ENCODE measurements at regions of chr4 and their contacts with region 1.

Region 1: GRCh38 chr4:166165829-166166420 is 292.9 kb downstream of the TLL1 start:
- DNase-seq: no peak
- H3K4me3 Mint-ChIP-seq: no peak overlapping the region
- H3K27ac Mint-ChIP-seq: no peak overlapping the region
- H3K4me1 Mint-ChIP-seq: no peaks in the 10 kb centered on the region
- H3K27me3 Mint-ChIP-seq: no peaks in the 10 kb centered on the region

Region 2: GRCh38 chr4:166252487-166253402 is 86.8 kb after region 1 on chr4:
- CTCF ChIA-PET with region 1: no interaction called
- POLR2A ChIA-PET with region 1: no interaction called
- intact Hi-C with region 1: loop called (anchors 1 kb)
- DNase-seq: no peak
- H3K4me3 Mint-ChIP-seq: no peak overlapping the region
- H3K27ac Mint-ChIP-seq: no peak overlapping the region
- H3K4me1 Mint-ChIP-seq: no peaks in the 10 kb centered on the region
- H3K27me3 Mint-ChIP-seq: no peaks in the 10 kb centered on the region

Region 3: GRCh38 chr4:166594326-166594946 is 428.5 kb after region 1 on chr4:
- CTCF ChIA-PET with region 1: no interaction called
- POLR2A ChIA-PET with region 1: no interaction called
- intact Hi-C with region 1: loop called (anchors 10 kb)
- DNase-seq: no peak
- H3K4me3 Mint-ChIP-seq: no peak overlapping the region
- H3K27ac Mint-ChIP-seq: no peak overlapping the region
- H3K4me1 Mint-ChIP-seq: no peaks in the 10 kb centered on the region
- H3K27me3 Mint-ChIP-seq: no peaks in the 10 kb centered on the region

Region 4: DNA sequence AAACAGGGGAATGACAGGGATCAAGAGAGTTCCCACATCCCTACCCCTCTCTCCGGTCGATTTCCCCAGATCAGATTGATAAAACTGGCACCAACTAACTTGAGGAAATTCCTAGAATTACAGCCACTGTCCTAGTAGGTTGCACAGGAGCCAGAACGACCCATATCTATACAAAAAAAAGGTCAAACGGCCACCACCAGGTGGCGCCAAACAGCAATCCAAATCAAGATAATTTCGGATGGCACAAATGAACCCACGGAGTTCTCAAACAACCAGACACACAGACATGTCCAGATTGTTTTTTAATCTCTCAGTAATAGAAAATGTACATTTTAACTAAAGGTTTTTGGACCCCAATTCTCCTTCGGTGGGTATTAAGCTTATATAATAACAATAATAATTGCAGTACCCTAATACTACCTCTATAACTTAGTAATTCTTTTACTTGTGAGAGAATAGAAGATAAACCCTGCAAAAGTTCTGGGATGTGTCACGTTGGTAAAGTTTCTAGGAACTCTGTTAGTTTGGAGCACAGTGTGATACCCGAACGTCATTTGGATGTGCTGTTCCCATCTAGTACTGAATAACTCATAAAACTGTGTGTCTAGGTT is 855.7 kb after region 1 on chr4:
- CTCF ChIA-PET with region 1: no interaction called
- POLR2A ChIA-PET with region 1: no interaction called
- intact Hi-C with region 1: loop called (anchors 5 kb)
- DNase-seq: peak; percentile 67
- H3K4me3 Mint-ChIP-seq: no peak overlapping the region
- H3K27ac Mint-ChIP-seq: no peak overlapping the region
- H3K4me1 Mint-ChIP-seq: no peaks in the 10 kb centered on the region
- H3K27me3 Mint-ChIP-seq: no peaks in the 10 kb centered on the region

Region 5: GRCh38 chr4:168076989-168077725 is 1911.2 kb after region 1 on chr4:
- CTCF ChIA-PET with region 1: no interaction called
- POLR2A ChIA-PET with region 1: no interaction called
- intact Hi-C with region 1: loop called (anchors 2 kb)
- DNase-seq: peak; percentile 53
- H3K4me3 Mint-ChIP-seq: no peak overlapping the region
- H3K27ac Mint-ChIP-seq: no peak overlapping the region
- H3K4me1 Mint-ChIP-seq: no peaks in the 10 kb centered on the region
- H3K27me3 Mint-ChIP-seq: no peaks in the 10 kb centered on the region

Region 6: GRCh38 chr4:168153596-168154440 is 1987.9 kb after region 1 on chr4:
- CTCF ChIA-PET with region 1: interaction called, 4 read pairs
- POLR2A ChIA-PET with region 1: no interaction called
- intact Hi-C with region 1: loop called (anchors 5 kb)
- DNase-seq: peak; percentile 65
- H3K4me3 Mint-ChIP-seq: no peak overlapping the region
- H3K27ac Mint-ChIP-seq: no peak overlapping the region
- H3K4me1 Mint-ChIP-seq: peaks cover 6% of the 10 kb centered on the region
- H3K27me3 Mint-ChIP-seq: peaks cover 1% of the 10 kb centered on the region

Measured in activated CD4-positive, alpha-beta memory T cell treated with anti-CD3 and anti-CD28 coated beads for 36 hours (primary cell).